ENCODE measurements at regions of chrX and their contacts with region 1.

Region 1: DNA sequence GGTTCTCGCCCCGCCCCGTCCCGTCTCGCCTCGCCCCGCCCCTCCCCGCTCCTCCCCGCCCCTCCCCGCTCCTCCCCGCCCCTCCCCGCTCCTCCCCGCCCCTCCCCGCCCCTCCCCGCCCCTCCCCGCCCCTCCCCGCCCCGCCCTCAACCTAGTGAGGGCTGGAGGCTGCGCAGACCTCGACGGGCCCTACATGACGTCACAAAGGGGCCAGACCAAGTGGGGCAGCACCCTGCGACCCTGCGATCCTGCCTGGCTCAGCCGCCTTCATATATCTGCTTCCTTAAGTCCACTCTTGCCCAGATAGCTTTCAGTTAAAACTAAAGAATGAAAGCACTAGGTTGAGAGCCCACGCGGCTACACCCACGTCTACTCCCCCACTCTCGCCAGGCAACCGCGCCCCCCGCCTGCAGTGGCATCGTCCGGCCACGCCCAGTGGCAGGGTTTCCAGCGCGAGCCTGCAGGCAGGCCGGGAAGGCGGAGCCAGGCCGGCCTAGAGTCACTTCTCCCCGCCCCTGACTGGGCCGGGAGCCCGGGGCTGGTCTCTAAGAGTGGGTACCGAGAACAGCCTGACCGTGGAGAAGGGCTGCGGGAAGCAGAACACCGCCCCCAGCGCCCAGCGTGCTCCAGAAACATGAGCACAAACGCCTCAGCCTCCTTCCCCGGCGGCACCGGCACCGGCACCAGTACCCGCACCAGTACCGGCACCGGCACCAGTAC is 1.5 kb upstream of the MAOA start:
- DNase-seq: peak; percentile 94 to 97
- H3K4me3 ChIP-seq: peak overlapping the region; percentile 90 to 93
- H3K27ac ChIP-seq: peak overlapping the region; percentile 84 to 93
- H3K4me1 ChIP-seq: peaks cover 0 to 3% (median 0%) of the 10 kb centered on the region in 4 donors
- H3K27me3 ChIP-seq: no peaks in the 10 kb centered on the region
- CTCF ChIP-seq: peak in 1 of 2 experiments; percentile 20

Region 2: DNA sequence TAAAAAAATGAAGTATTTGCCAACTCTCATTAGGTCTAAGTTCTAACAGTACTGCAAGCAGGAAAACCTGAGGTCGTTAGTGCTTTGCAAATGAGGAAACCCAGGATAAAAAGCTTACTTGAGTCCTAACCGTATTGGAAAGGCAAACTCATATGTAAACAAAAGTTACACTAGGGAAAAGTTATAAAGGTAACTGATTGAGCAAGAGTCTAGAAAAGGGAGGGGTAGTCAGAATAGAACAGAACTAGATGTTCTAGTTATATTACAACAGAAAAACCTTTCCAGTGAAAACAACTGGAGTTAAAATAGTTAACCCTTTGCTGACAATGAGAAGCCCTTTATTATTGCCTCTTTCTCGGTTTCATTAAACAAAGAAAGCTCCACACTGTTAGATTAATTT is 64.9 kb before region 1 on chrX:
- intact Hi-C with region 1: loop called (anchors 10 kb)
- DNase-seq: no peak
- H3K4me3 ChIP-seq: peak overlapping the region in 1 of 2 donors; percentile 25
- H3K27ac ChIP-seq: peak overlapping the region; percentile 75 to 83
- H3K4me1 ChIP-seq: peaks cover 0 to 17% (median 4%) of the 10 kb centered on the region in 4 donors
- H3K27me3 ChIP-seq: no peaks in the 10 kb centered on the region
- CTCF ChIP-seq: no peak

Region 3: DNA sequence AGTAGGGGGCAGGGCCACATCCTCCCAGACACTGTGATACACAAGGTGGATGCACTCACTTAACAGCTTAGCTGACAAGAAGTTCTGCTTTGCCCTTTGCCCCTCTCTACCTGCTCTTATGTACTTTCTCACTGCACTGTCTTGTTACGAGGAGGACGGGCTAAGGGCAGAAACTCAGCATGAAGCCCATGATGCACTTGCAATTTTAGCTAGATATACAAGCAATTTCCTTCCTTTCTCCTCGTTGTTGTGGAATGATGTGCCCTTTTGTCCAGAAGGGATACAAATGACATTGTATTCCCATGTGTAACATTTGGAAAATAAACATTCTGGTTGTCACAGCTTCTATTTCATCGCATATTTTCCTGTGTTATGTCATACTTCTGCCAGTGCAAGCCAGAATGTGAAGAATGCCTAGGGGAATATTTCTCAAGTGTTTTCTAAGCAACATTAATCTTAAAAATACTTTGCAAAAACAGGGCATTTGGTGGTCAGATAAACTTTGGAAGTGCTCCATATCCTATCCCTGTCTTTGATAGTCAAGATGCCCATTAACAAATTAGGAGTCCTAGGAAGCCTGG is 48.7 kb after region 1 on chrX:
- intact Hi-C with region 1: loop called (anchors 10 kb)
- DNase-seq: no peak
- H3K4me3 ChIP-seq: no peak overlapping the region
- H3K27ac ChIP-seq: peak overlapping the region; percentile 63 to 64
- H3K4me1 ChIP-seq: peaks cover 0 to 87% (median 9%) of the 10 kb centered on the region in 4 donors
- H3K27me3 ChIP-seq: no peaks in the 10 kb centered on the region
- CTCF ChIP-seq: no peak

Region 4: GRCh38 chrX:43741843-43742573 is 87.4 kb after region 1 on chrX:
- intact Hi-C with region 1: loop called (anchors 5 kb)
- DNase-seq: peak in 1 of 2 donors; percentile 23
- H3K4me3 ChIP-seq: no peak overlapping the region
- H3K27ac ChIP-seq: peak overlapping the region; percentile 29 to 43
- H3K4me1 ChIP-seq: peaks cover 0 to 22% (median 0%) of the 10 kb centered on the region in 4 donors
- H3K27me3 ChIP-seq: no peaks in the 10 kb centered on the region
- CTCF ChIP-seq: no peak